Activated CD4-positive, alpha-beta memory T cell treated with anti-CD3 and anti-CD28 coated beads for 36 hours (primary cell): ENCODE measurements at regions of chr14 and their contacts with region 1.

Region 1: DNA sequence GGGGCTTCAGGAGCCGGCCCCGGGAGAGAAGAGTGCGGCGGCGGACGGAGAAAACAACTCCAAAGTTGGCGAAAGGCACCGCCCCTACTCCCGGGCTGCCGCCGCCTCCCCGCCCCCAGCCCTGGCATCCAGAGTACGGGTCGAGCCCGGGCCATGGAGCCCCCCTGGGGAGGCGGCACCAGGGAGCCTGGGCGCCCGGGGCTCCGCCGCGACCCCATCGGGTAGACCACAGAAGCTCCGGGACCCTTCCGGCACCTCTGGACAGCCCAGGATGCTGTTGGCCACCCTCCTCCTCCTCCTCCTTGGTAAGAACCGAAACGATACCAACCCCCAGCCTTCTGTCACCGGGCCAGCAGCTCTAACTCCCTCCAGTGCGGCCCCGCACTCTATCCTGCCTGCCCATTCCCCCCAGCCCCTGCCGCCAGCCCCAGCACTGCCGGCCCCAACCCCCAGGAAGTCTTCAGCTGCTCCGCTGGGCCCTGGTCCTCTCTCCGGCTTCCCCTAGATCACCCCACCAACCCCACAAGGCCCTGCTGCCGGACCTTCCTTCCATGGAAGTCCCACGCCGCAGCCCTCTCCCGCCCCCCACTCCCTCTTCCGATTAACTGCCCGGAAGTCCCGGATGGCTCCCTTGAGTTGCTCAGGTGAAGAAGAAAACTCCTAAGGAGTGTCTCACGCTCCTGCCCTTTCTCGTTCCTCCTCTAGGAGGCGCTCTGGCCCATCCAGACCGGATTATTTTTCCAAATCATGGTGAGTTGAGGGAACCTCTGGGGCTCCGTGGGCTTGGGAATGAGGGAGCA is 693 bp downstream of the LRP10 start:
- DNase-seq: peak; percentile 84
- H3K4me3 Mint-ChIP-seq: peak overlapping the region; percentile 88
- H3K27ac Mint-ChIP-seq: peak overlapping the region; percentile 100
- H3K4me1 Mint-ChIP-seq: peaks cover 33% of the 10 kb centered on the region
- H3K27me3 Mint-ChIP-seq: no peaks in the 10 kb centered on the region

Region 2: DNA sequence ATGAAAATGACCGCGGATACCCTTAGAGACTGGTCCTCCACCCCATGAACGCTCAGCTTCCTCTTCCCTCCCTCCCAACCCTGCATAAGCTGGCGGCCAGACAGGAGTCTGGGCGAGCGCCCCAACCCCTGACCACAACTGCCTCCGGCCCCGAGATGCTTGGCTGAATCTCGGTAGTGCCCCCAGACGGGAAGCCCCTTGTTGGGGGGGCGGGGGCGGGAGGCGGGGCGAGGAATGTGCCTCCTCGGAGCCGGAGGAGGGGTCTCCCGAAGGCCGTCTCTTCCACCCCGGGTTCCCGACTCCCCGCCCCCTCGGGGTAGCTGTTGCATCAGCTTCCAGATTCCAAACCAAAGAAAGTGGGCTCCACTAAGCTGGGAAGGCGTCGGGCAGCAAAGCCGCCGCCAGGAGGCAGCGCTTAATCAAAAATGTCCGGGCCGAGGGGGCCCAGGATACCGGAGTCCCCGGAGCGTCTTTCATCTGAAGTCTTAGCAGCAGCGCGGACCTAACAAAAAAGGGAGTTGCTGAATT is 49.6 kb before region 1 on chr14:
- CTCF ChIA-PET with region 1: interaction called, 10 read pairs
- POLR2A ChIA-PET with region 1: no interaction called
- intact Hi-C with region 1: no loop called
- DNase-seq: peak; percentile 77
- H3K4me3 Mint-ChIP-seq: peak overlapping the region; percentile 63
- H3K27ac Mint-ChIP-seq: no peak overlapping the region
- H3K4me1 Mint-ChIP-seq: peaks cover 26% of the 10 kb centered on the region
- H3K27me3 Mint-ChIP-seq: peaks cover 12% of the 10 kb centered on the region

Region 3: GRCh38 chr14:22886500-22887259 is 14.4 kb after region 1 on chr14:
- CTCF ChIA-PET with region 1: interaction called, 115 read pairs
- POLR2A ChIA-PET with region 1: interaction called, 16 read pairs
- intact Hi-C with region 1: loop called (anchors 1 kb)
- DNase-seq: peak; percentile 91
- H3K4me3 Mint-ChIP-seq: peak overlapping the region; percentile 92
- H3K27ac Mint-ChIP-seq: peak overlapping the region; percentile 88
- H3K4me1 Mint-ChIP-seq: peaks cover 57% of the 10 kb centered on the region
- H3K27me3 Mint-ChIP-seq: no peaks in the 10 kb centered on the region

Region 4: DNA sequence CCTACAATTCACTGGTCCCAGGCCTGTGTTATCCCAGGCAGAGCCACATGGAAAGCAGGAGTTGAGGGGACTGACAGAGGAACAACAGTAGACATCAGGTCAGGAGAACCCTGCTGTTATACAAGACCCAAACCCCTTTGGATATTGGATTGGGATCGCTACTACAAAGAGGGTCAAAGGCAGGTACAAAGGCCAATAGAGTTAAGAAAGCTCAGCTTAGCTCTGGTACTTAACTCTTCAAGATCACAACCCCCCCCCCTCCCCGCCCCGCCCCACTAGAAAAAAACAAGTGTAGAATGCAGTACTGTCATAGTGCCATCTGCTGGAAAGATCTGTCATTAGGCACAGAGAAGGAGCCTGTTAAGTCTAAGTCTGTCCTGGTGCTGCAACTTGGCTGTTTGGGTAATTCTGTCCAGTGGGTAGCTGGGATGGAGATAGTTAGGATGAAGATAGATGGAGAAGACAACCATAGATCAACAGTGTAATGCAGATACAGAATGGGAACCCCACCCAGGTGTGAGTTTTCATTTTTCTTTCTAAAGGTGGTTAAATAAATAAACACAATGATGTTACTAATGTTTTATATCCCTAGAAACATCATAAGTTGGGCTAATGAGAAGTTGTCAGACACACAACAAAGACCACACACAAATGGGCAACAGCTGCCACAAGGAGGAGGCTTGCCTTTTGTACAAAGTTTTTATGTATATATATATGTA is 28.0 kb after region 1 on chr14:
- CTCF ChIA-PET with region 1: interaction called, 108 read pairs
- POLR2A ChIA-PET with region 1: interaction called, 5 read pairs
- intact Hi-C with region 1: loop called (anchors 1 kb)
- DNase-seq: peak; percentile 44
- H3K4me3 Mint-ChIP-seq: no peak overlapping the region
- H3K27ac Mint-ChIP-seq: no peak overlapping the region
- H3K4me1 Mint-ChIP-seq: peaks cover 11% of the 10 kb centered on the region
- H3K27me3 Mint-ChIP-seq: no peaks in the 10 kb centered on the region

Region 5: GRCh38 chr14:22929104-22929847 is 57.0 kb after region 1 on chr14 and contains the start of gene PRMT5:
- CTCF ChIA-PET with region 1: interaction called, 9 read pairs
- POLR2A ChIA-PET with region 1: interaction called, 5 read pairs
- intact Hi-C with region 1: loop called (anchors 1 kb)
- DNase-seq: peak; percentile 98
- H3K4me3 Mint-ChIP-seq: no peak within 1 kb of the TSS
- H3K27ac Mint-ChIP-seq: no peak within 1 kb of the TSS
- H3K4me1 Mint-ChIP-seq: peaks cover 37% of the 10 kb centered on the region
- H3K27me3 Mint-ChIP-seq: no peaks in the 10 kb centered on the region
- total RNA-seq, gene PRMT5: 85.6 to 100 TPM